ENCODE measurements at regions of chr3 and their contacts with region 1.

Region 1: GRCh38 chr3:43503067-43503728 is 118.6 kb downstream of the ANO10 start:
- DNase-seq: peak in 2 of 5 donors; percentile 46 to 53
- H3K4me3 ChIP-seq: no peak overlapping the region
- H3K4me3 Mint-ChIP-seq: no peak overlapping the region
- H3K27ac ChIP-seq: no peak overlapping the region
- H3K27ac Mint-ChIP-seq: peak overlapping the region in 5 of 8 donors; percentile 12 to 86 (median 54)
- H3K4me1 ChIP-seq: peaks cover 36% of the 10 kb centered on the region
- H3K4me1 Mint-ChIP-seq: peaks cover 45 to 49% (median 49%) of the 10 kb centered on the region in 3 donors
- H3K27me3 ChIP-seq: no peaks in the 10 kb centered on the region
- H3K27me3 Mint-ChIP-seq: no peaks in the 10 kb centered on the region

Region 2: GRCh38 chr3:42961633-42962032 is 541.6 kb before region 1 on chr3:
- CTCF ChIA-PET with region 1: interaction called, 10 read pairs
- POLR2A ChIA-PET with region 1: no interaction called
- DNase-seq: peak in 2 of 5 donors; percentile 14 to 43
- H3K4me3 ChIP-seq: no peak overlapping the region
- H3K4me3 Mint-ChIP-seq: no peak overlapping the region
- H3K27ac ChIP-seq: no peak overlapping the region
- H3K27ac Mint-ChIP-seq: no peak overlapping the region
- H3K4me1 ChIP-seq: peaks cover 16% of the 10 kb centered on the region
- H3K4me1 Mint-ChIP-seq: peaks cover 3 to 22% (median 10%) of the 10 kb centered on the region in 3 donors
- H3K27me3 ChIP-seq: peaks cover 4% of the 10 kb centered on the region
- H3K27me3 Mint-ChIP-seq: peaks cover 6 to 8% of the 10 kb centered on the region in 2 donors

Region 3: GRCh38 chr3:43094851-43095250 is 408.3 kb before region 1 on chr3:
- CTCF ChIA-PET with region 1: no interaction called
- POLR2A ChIA-PET with region 1: no interaction called
- DNase-seq: no peak
- H3K4me3 ChIP-seq: no peak overlapping the region
- H3K4me3 Mint-ChIP-seq: no peak overlapping the region
- H3K27ac ChIP-seq: no peak overlapping the region
- H3K27ac Mint-ChIP-seq: peak overlapping the region in 1 of 8 donors; percentile 48
- H3K4me1 ChIP-seq: no peaks in the 10 kb centered on the region
- H3K4me1 Mint-ChIP-seq: peaks cover 5 to 17% (median 7%) of the 10 kb centered on the region in 3 donors
- H3K27me3 ChIP-seq: no peaks in the 10 kb centered on the region
- H3K27me3 Mint-ChIP-seq: no peaks in the 10 kb centered on the region

Region 4: DNA sequence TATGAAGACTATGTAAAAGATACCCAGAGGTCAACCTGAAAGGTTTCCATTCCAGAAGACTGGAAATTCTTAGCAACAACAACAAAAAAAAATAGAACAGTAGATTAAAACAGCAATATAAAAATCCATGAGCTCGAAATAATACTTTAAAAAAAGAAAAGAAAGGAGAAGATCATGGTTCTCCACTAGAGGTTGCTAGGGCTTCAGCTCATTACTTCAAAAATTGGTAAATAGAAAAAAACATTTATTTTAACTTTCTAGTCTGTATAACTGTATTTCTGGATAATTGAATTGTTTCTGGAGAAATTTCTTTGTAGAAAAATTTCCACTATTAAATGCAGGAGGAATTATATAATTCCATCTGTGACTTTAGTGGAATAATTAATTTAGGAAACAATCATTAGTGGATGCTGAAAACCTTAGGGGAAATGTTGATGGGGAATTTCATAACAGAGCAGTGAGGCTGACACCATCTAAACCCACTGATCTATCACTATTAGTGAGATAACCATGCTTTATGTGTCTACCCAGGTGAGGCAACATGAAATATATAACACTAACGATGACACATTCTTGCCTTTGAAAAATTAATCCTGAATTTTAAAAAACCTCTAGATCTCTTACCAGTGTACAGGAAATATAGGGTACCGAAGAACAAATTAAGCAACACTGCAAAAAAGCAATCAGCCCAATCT is 279.4 kb before region 1 on chr3:
- CTCF ChIA-PET with region 1: interaction called, 28 read pairs
- POLR2A ChIA-PET with region 1: no interaction called
- DNase-seq: peak in 1 of 5 donors; percentile 10
- H3K4me3 ChIP-seq: no peak overlapping the region
- H3K4me3 Mint-ChIP-seq: no peak overlapping the region
- H3K27ac ChIP-seq: no peak overlapping the region
- H3K27ac Mint-ChIP-seq: peak overlapping the region in 6 of 8 donors; percentile 15 to 81 (median 51)
- H3K4me1 ChIP-seq: peaks cover 48% of the 10 kb centered on the region
- H3K4me1 Mint-ChIP-seq: peaks cover 46 to 52% (median 50%) of the 10 kb centered on the region in 3 donors
- H3K27me3 ChIP-seq: no peaks in the 10 kb centered on the region
- H3K27me3 Mint-ChIP-seq: no peaks in the 10 kb centered on the region

Region 5: DNA sequence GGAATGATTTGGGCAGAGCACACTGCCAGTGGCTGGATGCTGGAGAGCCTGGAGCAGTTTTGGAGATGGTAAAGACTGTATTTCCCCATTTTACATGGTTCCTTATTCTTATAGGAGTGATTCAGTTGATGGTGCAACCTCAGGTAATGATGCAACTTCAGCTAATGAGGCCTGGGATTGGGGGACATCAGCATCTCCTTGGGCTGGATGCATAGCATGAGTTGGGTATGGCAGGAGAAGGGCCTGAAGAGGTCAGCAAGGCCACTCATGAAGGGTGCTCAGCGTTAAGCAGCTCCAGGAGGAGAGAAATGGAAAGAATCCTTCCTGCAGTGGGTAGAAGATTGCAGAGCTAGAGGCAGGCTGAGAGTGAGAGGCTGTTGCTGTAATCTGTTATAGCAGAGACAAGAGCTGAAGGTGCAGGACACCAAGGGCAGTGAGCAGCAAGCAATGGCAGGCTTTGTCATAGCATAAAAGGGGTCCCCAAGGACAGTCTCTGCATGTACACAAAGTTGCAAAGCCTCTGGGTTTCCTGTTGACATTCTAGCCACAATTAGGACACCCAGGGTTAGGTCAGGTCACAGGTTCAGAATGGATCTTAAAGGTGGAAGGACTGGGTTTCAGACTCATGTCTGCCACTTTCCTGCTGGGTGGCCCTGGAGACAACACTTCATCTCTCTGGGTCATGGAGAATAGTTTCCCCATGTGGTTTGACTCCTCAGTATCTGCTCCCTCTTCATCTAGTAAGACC is 246.3 kb before region 1 on chr3:
- CTCF ChIA-PET with region 1: no interaction called
- POLR2A ChIA-PET with region 1: no interaction called
- DNase-seq: no peak
- H3K4me3 ChIP-seq: no peak overlapping the region
- H3K4me3 Mint-ChIP-seq: peak overlapping the region in 3 of 7 donors; percentile 17 to 54 (median 49)
- H3K27ac ChIP-seq: no peak overlapping the region
- H3K27ac Mint-ChIP-seq: peak overlapping the region in 6 of 8 donors; percentile 62 to 78 (median 71)
- H3K4me1 ChIP-seq: peaks cover 11% of the 10 kb centered on the region
- H3K4me1 Mint-ChIP-seq: peaks cover 21 to 26% (median 25%) of the 10 kb centered on the region in 3 donors
- H3K27me3 ChIP-seq: no peaks in the 10 kb centered on the region
- H3K27me3 Mint-ChIP-seq: peaks cover 0 to under 1% of the 10 kb centered on the region in 2 donors

Region 6: GRCh38 chr3:43378066-43378935 is 124.9 kb before region 1 on chr3:
- CTCF ChIA-PET with region 1: interaction called, 22 read pairs
- POLR2A ChIA-PET with region 1: no interaction called
- DNase-seq: peak; percentile 47 to 82 (median 62)
- H3K4me3 ChIP-seq: no peak overlapping the region
- H3K4me3 Mint-ChIP-seq: peak overlapping the region in 3 of 7 donors; percentile 2 to 45 (median 20)
- H3K27ac ChIP-seq: no peak overlapping the region
- H3K27ac Mint-ChIP-seq: peak overlapping the region; percentile 3 to 85 (median 62)
- H3K4me1 ChIP-seq: peaks cover 8% of the 10 kb centered on the region
- H3K4me1 Mint-ChIP-seq: peaks cover 18 to 33% (median 25%) of the 10 kb centered on the region in 3 donors
- H3K27me3 ChIP-seq: no peaks in the 10 kb centered on the region
- H3K27me3 Mint-ChIP-seq: peaks cover 0 to 1% of the 10 kb centered on the region in 2 donors

Region 7: DNA sequence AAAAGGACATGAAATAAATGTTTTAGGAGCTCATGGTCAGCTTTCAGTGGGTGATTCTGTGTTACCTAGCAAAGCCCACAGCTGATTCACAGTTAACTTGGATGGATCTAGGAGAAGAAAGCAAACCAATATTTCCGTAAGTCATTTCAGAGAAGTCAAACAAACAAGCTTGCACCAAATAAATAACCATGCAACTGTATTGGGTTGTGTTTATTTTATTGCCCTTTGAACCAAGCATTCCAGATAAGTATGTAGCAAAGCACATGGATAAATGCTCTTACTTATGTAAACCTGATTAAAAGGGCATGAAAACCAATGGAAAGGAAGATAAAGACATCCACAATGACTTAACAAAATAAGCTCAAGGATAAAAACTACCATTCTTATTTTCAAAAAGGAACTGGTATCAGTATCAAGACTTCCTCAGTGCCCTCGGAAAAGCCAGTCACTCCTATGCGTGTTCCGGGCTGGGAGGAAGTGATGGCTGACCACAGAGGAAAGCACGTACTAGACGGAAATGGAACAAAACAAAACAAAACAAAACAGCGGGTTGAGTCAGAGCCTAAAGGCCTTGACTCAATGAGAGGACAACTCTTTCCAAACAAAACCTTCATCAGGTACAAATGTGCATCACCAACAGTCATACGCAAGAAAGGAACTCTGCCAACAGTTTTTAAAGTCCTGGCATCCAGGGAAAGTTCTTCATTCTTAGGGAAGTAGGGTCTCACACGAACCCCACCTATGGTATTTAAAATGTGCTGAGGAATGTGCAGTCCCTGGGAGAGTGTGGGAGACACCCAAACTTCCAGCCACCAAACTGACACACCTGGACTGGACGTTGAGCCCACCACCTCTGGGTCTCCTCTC is 113.6 kb before region 1 on chr3:
- CTCF ChIA-PET with region 1: interaction called, 10 read pairs
- POLR2A ChIA-PET with region 1: interaction called, 4 read pairs
- DNase-seq: peak; percentile 43 to 89 (median 83)
- H3K4me3 ChIP-seq: peak overlapping the region; percentile 36
- H3K4me3 Mint-ChIP-seq: peak overlapping the region; percentile 0 to 88 (median 68)
- H3K27ac ChIP-seq: peak overlapping the region; percentile 62
- H3K27ac Mint-ChIP-seq: peak overlapping the region; percentile 90 to 99 (median 96)
- H3K4me1 ChIP-seq: peaks cover 47% of the 10 kb centered on the region
- H3K4me1 Mint-ChIP-seq: peaks cover 83 to 98% (median 95%) of the 10 kb centered on the region in 3 donors
- H3K27me3 ChIP-seq: no peaks in the 10 kb centered on the region
- H3K27me3 Mint-ChIP-seq: no peaks in the 10 kb centered on the region

Region 8: GRCh38 chr3:43477600-43477999 is 25.6 kb before region 1 on chr3:
- CTCF ChIA-PET with region 1: no interaction called
- POLR2A ChIA-PET with region 1: interaction called, 12 read pairs
- DNase-seq: peak; percentile 51 to 84 (median 77)
- H3K4me3 ChIP-seq: peak overlapping the region; percentile 29
- H3K4me3 Mint-ChIP-seq: peak overlapping the region; percentile 0 to 77 (median 64)
- H3K27ac ChIP-seq: peak overlapping the region; percentile 83
- H3K27ac Mint-ChIP-seq: peak overlapping the region; percentile 92 to 99 (median 98)
- H3K4me1 ChIP-seq: peaks cover 42% of the 10 kb centered on the region
- H3K4me1 Mint-ChIP-seq: peaks cover 61 to 70% (median 63%) of the 10 kb centered on the region in 3 donors
- H3K27me3 ChIP-seq: no peaks in the 10 kb centered on the region
- H3K27me3 Mint-ChIP-seq: no peaks in the 10 kb centered on the region

Region 9: DNA sequence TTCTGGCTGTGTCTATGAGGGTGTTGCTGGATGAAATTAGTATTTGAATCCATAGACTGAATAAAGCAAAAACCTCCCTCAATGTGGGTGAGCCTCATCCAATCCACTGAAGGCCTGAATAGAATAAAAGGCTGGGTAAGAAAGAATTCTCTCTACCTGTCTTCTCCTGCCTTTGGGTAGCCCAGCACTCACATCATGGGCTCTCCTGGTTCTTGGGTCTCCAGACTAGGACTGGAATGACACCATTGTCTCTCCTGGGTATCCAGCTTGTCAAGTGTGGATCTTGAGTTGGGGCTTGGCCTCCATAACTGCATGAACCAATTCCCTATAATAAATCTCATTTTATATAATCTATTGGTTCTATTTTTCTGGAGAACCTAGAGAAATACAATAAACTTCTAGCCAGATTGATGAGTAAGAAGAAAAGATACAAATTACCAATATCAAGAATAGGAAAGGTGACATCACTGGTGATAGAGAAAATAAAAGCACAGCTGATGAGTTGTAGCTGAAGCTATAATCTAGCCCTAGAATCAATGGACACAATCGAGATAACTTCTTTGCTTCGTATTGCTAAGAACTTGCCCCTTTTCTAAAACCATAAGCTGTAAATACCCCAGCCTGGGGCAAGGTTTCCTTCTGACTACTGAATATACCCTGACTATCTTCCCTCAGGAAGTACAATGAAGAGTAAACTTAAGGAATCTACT is 12.2 kb after region 1 on chr3:
- CTCF ChIA-PET with region 1: no interaction called
- POLR2A ChIA-PET with region 1: no interaction called
- DNase-seq: no peak
- H3K4me3 ChIP-seq: no peak overlapping the region
- H3K4me3 Mint-ChIP-seq: no peak overlapping the region
- H3K27ac ChIP-seq: no peak overlapping the region
- H3K27ac Mint-ChIP-seq: no peak overlapping the region
- H3K4me1 ChIP-seq: no peaks in the 10 kb centered on the region
- H3K4me1 Mint-ChIP-seq: no peaks in the 10 kb centered on the region
- H3K27me3 ChIP-seq: no peaks in the 10 kb centered on the region
- H3K27me3 Mint-ChIP-seq: peaks cover 0 to 2% of the 10 kb centered on the region in 2 donors

Region 10: DNA sequence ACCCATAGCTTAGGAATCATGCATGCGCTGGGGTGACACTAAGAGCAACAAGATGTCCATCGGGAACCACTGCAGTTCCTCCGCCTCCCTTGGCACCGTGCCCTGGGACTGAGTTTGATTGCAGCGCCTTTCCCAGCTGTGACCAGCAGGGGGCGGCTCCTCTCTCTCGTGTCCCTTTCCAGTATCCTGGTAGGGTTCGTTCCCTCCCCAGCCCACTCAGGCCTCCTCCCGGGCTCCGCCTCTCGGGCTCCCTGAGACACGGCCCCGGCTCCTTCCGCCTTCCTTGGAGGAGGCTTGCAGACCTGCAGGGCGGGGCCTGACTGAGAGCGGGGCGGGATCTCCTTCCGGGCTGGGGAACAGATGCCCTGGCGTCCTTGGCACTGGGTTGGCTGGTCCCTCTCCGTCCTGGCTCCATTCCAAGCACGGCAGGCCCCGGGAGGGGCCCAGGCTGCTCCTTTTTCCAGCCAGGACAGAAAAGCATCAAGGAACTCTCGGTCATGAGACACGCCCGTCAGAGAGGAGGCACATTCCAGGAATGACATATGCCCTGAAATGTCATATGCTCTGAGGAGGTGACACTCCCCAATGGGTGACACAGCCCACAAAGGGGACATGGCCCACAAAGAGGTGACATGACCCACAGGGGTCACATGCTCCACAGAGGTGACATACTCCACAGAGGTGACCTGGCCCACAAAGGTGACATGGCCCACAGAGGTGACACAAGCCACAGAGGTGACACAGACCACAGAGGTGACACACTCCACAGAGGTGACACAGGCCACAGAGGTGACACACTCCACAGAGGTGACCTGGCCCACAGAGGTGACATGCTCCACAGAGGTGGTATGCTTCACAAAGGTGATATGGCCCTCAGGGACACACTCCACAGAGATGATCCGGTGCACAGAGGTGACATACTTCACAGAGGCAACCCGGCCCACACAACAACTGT is 266.6 kb after region 1 on chr3:
- CTCF ChIA-PET with region 1: no interaction called
- POLR2A ChIA-PET with region 1: no interaction called
- DNase-seq: peak; percentile 50 to 74 (median 58)
- H3K4me3 ChIP-seq: no peak overlapping the region
- H3K4me3 Mint-ChIP-seq: peak overlapping the region in 6 of 7 donors; percentile 0 to 63 (median 32)
- H3K27ac ChIP-seq: peak overlapping the region; percentile 46
- H3K27ac Mint-ChIP-seq: peak overlapping the region in 7 of 8 donors; percentile 19 to 91 (median 54)
- H3K4me1 ChIP-seq: peaks cover 19% of the 10 kb centered on the region
- H3K4me1 Mint-ChIP-seq: peaks cover 24 to 34% (median 27%) of the 10 kb centered on the region in 3 donors
- H3K27me3 ChIP-seq: no peaks in the 10 kb centered on the region
- H3K27me3 Mint-ChIP-seq: peaks cover 6 to 17% of the 10 kb centered on the region in 2 donors

Measured in CD8-positive, alpha-beta memory T cell (primary cell).